Breast epithelium (tissue), 4 donors: ENCODE measurements at regions of chr9 and their contacts with region 1.

Region 1: GRCh38 chr9:37811906-37812476 is 11.4 kb downstream of the DCAF10 start:
- DNase-seq: no peak
- H3K4me3 ChIP-seq: no peak overlapping the region
- H3K27ac ChIP-seq: no peak overlapping the region
- H3K4me1 ChIP-seq: no peaks in the 10 kb centered on the region
- H3K27me3 ChIP-seq: no peaks in the 10 kb centered on the region
- CTCF ChIP-seq: no peak
- POLR2A ChIP-seq: no peak

Region 2: GRCh38 chr9:36903541-36904435 is 908.2 kb before region 1 on chr9:
- intact Hi-C with region 1: no loop called
- DNase-seq: no peak
- H3K4me3 ChIP-seq: no peak overlapping the region
- H3K27ac ChIP-seq: no peak overlapping the region
- H3K4me1 ChIP-seq: no peaks in the 10 kb centered on the region
- H3K27me3 ChIP-seq: no peaks in the 10 kb centered on the region
- CTCF ChIP-seq: no peak
- POLR2A ChIP-seq: no peak

Region 3: GRCh38 chr9:37827473-37828165 is 15.6 kb after region 1 on chr9:
- intact Hi-C with region 1: loop called (anchors 2 kb)
- DNase-seq: no peak
- H3K4me3 ChIP-seq: no peak overlapping the region
- H3K27ac ChIP-seq: no peak overlapping the region
- H3K4me1 ChIP-seq: no peaks in the 10 kb centered on the region
- H3K27me3 ChIP-seq: no peaks in the 10 kb centered on the region
- CTCF ChIP-seq: no peak
- POLR2A ChIP-seq: no peak

Region 4: DNA sequence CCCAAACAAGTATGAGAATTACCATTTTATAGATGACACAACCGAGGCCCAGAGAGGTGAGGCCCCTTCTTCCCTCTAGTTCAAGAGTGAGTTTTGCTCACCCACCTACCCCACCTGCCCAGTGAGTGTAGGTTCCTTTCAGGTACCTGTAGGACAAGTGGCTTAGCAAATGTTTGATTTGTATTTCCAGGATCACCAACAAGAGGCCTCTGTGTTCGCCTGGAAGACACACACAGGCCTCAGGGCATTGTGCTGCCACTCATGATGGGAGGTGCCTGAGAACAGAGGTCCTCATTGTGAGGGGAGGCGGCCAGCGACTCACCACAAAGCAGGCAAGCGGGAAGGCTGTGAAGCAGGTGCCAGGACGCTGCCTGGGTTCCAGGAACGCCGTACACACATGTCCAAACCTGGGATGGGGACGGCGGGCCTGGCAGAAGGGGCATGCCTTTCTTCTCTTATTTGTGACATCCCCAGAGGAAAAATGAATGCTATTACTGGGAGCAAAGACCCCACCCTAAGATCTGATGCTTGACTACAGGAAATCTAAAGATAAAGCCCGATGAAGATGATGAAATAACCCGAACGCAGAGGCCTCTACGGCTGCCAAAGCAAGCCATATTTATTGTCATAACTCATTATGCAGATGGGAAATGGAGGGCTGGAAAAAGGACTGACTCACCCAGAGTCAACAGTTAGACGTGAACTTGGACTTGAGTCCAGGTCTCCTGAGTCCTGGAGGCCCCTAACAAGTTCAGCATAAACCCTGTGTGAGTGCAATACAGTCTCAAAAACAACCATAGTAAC is 152.1 kb after region 1 on chr9:
- intact Hi-C with region 1: no loop called
- DNase-seq: peak; percentile 93 to 98
- H3K4me3 ChIP-seq: no peak overlapping the region
- H3K27ac ChIP-seq: peak overlapping the region; percentile 81 to 93
- H3K4me1 ChIP-seq: peaks cover 0 to 16% of the 10 kb centered on the region in 2 donors
- H3K27me3 ChIP-seq: peaks cover 0 to 3% of the 10 kb centered on the region in 2 donors
- CTCF ChIP-seq: no peak
- POLR2A ChIP-seq: no peak